ENCODE measurements at regions of chr11 and their contacts with region 1.

Region 1: GRCh38 chr11:118263695-118264567 is at the start of gene MPZL2:
- DNase-seq: peak in 1 of 2 donors; percentile 15
- ATAC-seq: peak in 3 of 4 donors; percentile 47 to 49 (median 48)
- H3K4me3 ChIP-seq: peak within 1 kb of the TSS; percentile 55
- H3K27ac ChIP-seq: no peak within 1 kb of the TSS
- H3K4me1 ChIP-seq: no peaks in the 10 kb centered on the region
- H3K27me3 ChIP-seq: peaks cover 4 to 50% (median 7%) of the 10 kb centered on the region in 3 donors
- CTCF ChIP-seq: no peak
- total RNA-seq, gene MPZL2: 1.1 to 8.1 (median 3.5) TPM

Region 2: DNA sequence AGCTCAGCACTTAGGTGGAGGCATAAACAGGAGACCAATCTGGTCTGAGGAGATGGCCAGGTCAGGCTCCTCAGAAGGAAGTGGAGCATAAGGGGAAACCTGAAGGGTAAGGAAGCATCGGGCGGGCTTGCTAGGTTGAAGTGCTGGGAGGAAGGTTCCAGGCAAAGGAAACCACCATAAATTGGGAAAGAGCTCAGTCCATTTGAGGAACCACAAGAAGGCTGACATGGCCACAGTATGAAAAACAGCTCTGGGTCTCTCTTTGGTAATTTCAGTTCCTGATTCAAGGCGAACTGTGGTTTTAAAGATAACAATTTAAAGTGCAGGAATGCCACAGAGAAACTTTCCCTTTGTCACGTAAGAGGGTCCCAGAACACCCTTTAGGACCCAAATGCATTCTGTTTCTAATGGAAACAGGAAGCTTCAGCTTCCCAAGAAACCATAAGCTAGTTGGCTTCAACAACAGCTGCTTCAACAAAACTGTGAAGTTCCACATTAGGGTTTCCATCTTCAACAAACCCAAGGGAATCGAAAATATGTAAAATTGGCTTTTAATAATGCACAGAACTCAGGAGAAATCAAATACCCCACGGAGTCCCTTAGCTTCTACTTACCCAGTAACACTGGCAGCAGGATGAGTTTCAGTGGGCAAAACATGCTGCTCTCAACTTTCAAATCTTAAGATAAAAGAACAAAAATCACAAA is 49.6 kb before region 1 on chr11:
- intact Hi-C with region 1: loop called in 1 of 2 experiments (anchors 5 kb)
- DNase-seq: no peak
- ATAC-seq: no peak
- H3K4me3 ChIP-seq: no peak overlapping the region
- H3K27ac ChIP-seq: no peak overlapping the region
- H3K4me1 ChIP-seq: no peaks in the 10 kb centered on the region
- H3K27me3 ChIP-seq: peaks cover 4 to 34% (median 4%) of the 10 kb centered on the region in 3 donors
- CTCF ChIP-seq: no peak

Region 3: GRCh38 chr11:118715245-118715831 is 451.4 kb after region 1 on chr11:
- intact Hi-C with region 1: no loop called
- DNase-seq: no peak
- ATAC-seq: no peak
- H3K4me3 ChIP-seq: no peak overlapping the region
- H3K27ac ChIP-seq: no peak overlapping the region
- H3K4me1 ChIP-seq: no peaks in the 10 kb centered on the region
- H3K27me3 ChIP-seq: no peaks in the 10 kb centered on the region
- CTCF ChIP-seq: no peak